SK-N-SH (cell line): ENCODE measurements at regions of chr6 and their contacts with region 1.

Region 1: DNA sequence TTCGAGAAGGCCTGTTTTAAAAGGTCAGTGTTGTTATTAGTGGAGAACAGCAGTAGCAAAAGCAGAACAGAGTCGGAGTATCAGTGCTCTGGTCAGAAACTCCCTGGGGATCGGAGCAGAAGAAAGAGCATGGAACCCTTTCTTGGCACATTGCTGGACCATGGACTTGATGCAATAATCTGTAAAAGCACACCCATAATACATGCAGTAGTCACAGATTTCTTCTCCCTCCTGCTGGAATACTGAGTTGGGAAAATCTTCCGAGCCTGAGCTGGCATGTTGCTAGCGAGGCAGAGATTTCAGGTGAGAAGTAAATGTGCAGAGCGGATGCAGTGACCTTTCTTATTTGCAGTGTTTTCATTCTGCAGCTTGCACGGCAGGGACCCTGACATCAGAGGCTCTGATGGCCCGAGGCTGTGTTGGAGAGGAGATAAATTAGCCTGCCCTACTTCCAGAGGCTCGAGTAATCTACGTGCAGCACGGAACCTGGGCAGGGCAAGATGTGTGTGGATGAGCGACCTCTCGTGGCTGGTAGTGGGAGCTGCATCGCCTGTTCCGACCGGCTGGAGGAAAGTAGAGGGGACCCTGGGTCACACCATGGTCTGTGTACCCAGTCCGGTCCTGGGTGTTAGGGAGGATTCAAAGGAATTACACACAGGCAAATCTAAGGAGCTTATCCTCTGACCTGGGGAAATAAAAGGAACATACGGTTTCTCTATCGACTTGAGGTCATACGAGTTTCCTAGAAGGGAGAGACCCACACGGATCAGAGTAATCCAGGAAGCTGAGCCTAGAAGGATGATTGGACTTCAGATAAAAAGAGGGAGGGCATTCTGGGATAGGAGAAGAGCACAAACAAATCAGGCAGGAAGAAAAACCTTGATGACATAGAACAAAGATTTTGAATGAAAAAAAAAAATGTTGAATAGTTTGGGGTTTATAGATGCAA is 137.0 kb upstream of the STMND1 start:
- DNase-seq: peak; percentile 70
- H3K4me3 ChIP-seq: no peak overlapping the region; a peak in 2 of 4 replicates
- H3K27ac ChIP-seq: no peak overlapping the region
- H3K4me1 ChIP-seq: peaks cover 5 to 30% of the 10 kb centered on the region in 2 experiments
- H3K27me3 ChIP-seq: no peaks in the 10 kb centered on the region
- CTCF ChIP-seq: peak; percentile 94
- EP300 ChIP-seq: no peak
- RAD21 ChIP-seq: peak; percentile 87

Region 2: GRCh38 chr6:16511040-16511660 is 453.7 kb before region 1 on chr6:
- CTCF ChIA-PET with region 1: interaction called, 10 read pairs
- POLR2A ChIA-PET with region 1: no interaction called
- DNase-seq: peak; percentile 38
- H3K4me3 ChIP-seq: no peak overlapping the region
- H3K27ac ChIP-seq: no peak overlapping the region
- H3K4me1 ChIP-seq: peaks cover 2 to 3% of the 10 kb centered on the region in 2 experiments; a peak in 2 of 4 replicates
- H3K27me3 ChIP-seq: no peaks in the 10 kb centered on the region
- CTCF ChIP-seq: peak; percentile 75
- EP300 ChIP-seq: no peak
- RAD21 ChIP-seq: peak; percentile 54

Region 3: DNA sequence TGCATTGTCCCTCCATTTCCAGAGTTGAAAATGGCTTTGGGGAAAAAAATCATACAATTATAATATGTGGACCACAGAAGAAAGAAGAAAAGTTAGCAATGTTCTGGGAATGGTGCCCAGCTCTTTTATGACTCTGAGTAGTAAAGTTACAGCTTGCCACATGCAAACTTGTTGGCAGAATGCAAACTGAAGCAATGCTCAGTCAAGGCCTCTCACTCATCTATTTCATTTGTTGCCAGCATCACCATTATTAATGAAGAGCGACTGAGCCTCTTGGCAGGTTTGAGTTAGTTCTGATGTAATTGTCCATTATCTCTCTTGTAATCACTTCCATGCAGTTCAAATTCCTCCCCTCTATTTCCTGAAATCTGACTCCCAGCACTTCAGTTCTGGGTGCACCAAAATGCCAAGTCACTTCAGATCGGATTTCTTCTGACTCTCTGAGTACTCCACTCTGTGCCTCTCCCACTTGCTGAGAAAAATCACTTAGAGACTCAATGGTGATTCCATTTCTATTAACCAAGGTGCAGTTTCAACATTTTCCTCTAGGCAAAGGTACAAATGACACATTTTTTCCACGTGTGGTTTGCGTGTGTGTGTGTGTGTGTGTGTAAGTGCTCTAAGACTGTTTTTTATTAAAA is 17.3 kb before region 1 on chr6:
- CTCF ChIA-PET with region 1: interaction called, 45 read pairs
- POLR2A ChIA-PET with region 1: no interaction called
- DNase-seq: no peak
- H3K4me3 ChIP-seq: no peak overlapping the region
- H3K27ac ChIP-seq: peak overlapping the region; percentile 85 to 95
- H3K4me1 ChIP-seq: peaks cover 4 to 36% of the 10 kb centered on the region in 2 experiments; a peak in 3 of 4 replicates
- H3K27me3 ChIP-seq: no peaks in the 10 kb centered on the region
- CTCF ChIP-seq: no peak
- EP300 ChIP-seq: peak; percentile 78 to 99
- RAD21 ChIP-seq: no peak

Region 4: GRCh38 chr6:16982807-16983206 is 18.0 kb after region 1 on chr6:
- CTCF ChIA-PET with region 1: interaction called, 17 read pairs
- POLR2A ChIA-PET with region 1: no interaction called
- DNase-seq: no peak
- H3K4me3 ChIP-seq: no peak overlapping the region
- H3K27ac ChIP-seq: peak overlapping the region in 1 of 2 experiments; percentile 2; a peak in 1 of 4 replicates
- H3K4me1 ChIP-seq: peaks cover 0 to 4% of the 10 kb centered on the region in 2 experiments; a peak in 1 of 4 replicates
- H3K27me3 ChIP-seq: no peaks in the 10 kb centered on the region
- CTCF ChIP-seq: no peak
- EP300 ChIP-seq: peak in 1 of 2 experiments; percentile 28; a peak in 1 of 4 replicates
- RAD21 ChIP-seq: no peak